Stomach (tissue), 19 donors: ENCODE measurements at regions of chr1 and their contacts with region 1.

Region 1: DNA sequence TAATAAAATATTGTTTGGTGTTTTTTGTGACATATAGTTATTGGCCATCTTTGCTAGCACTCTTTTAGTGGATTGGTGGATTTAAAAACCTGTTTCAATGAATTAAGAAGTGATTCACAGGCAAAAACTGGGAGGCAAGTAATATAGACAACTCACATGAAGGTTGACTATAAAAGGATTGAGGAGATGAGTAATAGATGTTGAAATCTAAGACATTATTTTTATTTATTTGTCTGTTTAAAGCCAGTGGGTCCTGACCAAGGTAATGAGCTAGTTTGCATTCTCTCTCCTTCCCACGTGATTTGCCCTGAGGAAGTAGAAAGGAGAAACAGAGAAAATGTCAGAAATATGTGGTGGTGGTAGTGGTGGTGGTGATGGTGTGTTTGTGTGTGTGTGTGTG is 351.5 kb upstream of the ZP4 start:
- DNase-seq: no peak
- H3K4me3 ChIP-seq: no peak overlapping the region
- H3K27ac ChIP-seq: no peak overlapping the region
- H3K4me1 ChIP-seq: no peaks in the 10 kb centered on the region
- H3K27me3 ChIP-seq: no peaks in the 10 kb centered on the region
- CTCF ChIP-seq: no peak
- EP300 ChIP-seq: no peak
- POLR2A ChIP-seq: no peak

Region 2: DNA sequence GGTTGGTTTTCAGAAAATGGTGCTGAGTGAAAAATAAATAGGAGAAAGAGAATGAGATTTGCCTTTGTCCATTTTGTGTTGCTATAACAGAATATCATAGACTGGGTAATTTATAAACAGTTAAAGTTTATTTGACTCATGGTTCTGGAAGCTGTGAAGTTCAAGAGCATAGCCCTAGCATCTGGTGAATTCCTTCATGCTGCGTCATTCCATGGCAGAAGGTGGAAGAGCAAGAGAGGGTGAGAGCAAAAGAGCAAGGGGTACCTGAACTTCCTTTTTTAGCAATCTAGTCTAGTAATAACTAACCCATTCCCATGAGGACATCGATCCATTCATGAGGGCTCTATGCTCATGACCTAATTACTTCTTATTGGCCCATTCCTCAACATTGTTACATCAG is 142.3 kb before region 1 on chr1:
- intact Hi-C with region 1: no loop called
- DNase-seq: no peak
- H3K4me3 ChIP-seq: no peak overlapping the region
- H3K27ac ChIP-seq: no peak overlapping the region
- H3K4me1 ChIP-seq: no peaks in the 10 kb centered on the region
- H3K27me3 ChIP-seq: no peaks in the 10 kb centered on the region
- CTCF ChIP-seq: no peak
- EP300 ChIP-seq: no peak
- POLR2A ChIP-seq: no peak

Region 3: DNA sequence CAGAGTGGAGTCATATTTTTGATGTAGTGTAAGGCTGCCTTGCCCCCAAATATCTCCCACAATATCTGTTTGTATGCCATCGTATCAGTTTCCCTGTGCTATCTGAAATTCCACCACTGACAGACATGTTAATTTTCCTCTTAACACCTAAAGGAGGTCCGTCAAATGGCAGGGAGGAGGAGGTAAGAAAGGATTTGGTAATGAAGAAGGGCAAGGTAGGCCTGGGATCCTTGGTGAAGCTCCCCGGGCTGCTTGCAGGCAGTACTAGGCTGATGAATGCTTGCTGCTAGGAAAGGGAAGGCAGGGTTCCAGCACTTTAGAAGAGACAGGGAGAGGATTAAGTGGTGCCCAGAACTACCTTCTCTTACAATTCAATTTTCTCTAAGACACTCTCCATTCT is 50.9 kb after region 1 on chr1:
- intact Hi-C with region 1: loop called (anchors 5 kb)
- DNase-seq: no peak
- H3K4me3 ChIP-seq: no peak overlapping the region
- H3K27ac ChIP-seq: no peak overlapping the region
- H3K4me1 ChIP-seq: no peaks in the 10 kb centered on the region
- H3K27me3 ChIP-seq: no peaks in the 10 kb centered on the region
- CTCF ChIP-seq: no peak
- EP300 ChIP-seq: no peak
- POLR2A ChIP-seq: no peak